Activated CD4-positive, alpha-beta T cell treated with anti-CD3 and anti-CD28 coated beads, Interleukin-2, amount 10 ng/mL, durations not matched to agents 7 days and 5 days (primary cell): ENCODE measurements at regions of chr6 and their contacts with region 1.

Region 1: DNA sequence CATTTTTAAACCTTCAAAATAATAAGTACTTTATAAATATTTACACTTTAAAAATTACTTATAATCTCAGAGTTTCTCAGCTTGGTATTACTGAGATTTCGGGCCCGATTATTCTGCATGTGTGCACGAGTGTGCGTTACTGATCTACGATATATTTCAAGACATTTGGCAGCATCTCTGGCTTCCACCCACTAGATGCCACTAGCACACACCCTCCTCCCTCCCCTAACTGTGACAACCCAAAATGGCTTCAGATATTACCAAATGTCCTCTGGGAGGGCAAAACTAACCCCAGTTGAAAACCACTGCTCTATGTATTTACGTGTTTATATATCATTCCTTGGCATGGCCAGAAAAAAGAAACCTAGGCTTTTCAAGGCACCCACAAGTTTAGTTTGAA is 95.9 kb downstream of the FYN start:
- DNase-seq: no peak
- H3K4me3 Mint-ChIP-seq: no peak overlapping the region
- H3K27ac Mint-ChIP-seq: peak overlapping the region; percentile 66
- H3K4me1 Mint-ChIP-seq: peaks cover 84% of the 10 kb centered on the region
- H3K27me3 Mint-ChIP-seq: no peaks in the 10 kb centered on the region

Region 2: GRCh38 chr6:111764238-111765175 is 12.8 kb before region 1 on chr6:
- CTCF ChIA-PET with region 1: interaction called, 12 read pairs
- POLR2A ChIA-PET with region 1: interaction called, 3 read pairs
- DNase-seq: peak; percentile 47
- H3K4me3 Mint-ChIP-seq: peak overlapping the region; percentile 17
- H3K27ac Mint-ChIP-seq: peak overlapping the region; percentile 91
- H3K4me1 Mint-ChIP-seq: peaks cover 100% of the 10 kb centered on the region
- H3K27me3 Mint-ChIP-seq: no peaks in the 10 kb centered on the region

Region 3: DNA sequence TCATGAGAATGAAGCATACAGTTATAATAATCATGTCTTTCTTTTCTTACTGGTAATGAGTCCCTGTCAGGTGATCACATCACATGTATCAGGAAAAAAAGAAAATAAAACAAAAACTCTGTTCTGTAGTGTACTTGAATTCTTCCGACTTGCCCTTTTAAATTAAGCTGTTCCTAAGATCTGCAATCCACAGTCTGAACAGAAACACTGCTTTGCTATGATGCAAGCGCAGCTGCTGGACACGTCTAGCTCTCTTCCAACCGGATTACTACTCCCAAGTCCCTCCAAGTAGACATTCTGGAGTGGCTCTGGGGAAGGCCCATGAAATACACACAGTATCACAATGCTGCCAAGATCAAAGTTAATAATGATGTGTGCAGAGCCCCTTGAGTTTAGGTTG is 12.2 kb after region 1 on chr6:
- CTCF ChIA-PET with region 1: interaction called, 17 read pairs
- POLR2A ChIA-PET with region 1: no interaction called
- DNase-seq: no peak
- H3K4me3 Mint-ChIP-seq: no peak overlapping the region
- H3K27ac Mint-ChIP-seq: no peak overlapping the region
- H3K4me1 Mint-ChIP-seq: peaks cover 48% of the 10 kb centered on the region
- H3K27me3 Mint-ChIP-seq: no peaks in the 10 kb centered on the region

Region 4: GRCh38 chr6:111804627-111805235 is 27.4 kb after region 1 on chr6:
- CTCF ChIA-PET with region 1: interaction called, 10 read pairs
- POLR2A ChIA-PET with region 1: no interaction called
- DNase-seq: peak; percentile 74
- H3K4me3 Mint-ChIP-seq: peak overlapping the region; percentile 66
- H3K27ac Mint-ChIP-seq: peak overlapping the region; percentile 82
- H3K4me1 Mint-ChIP-seq: peaks cover 86% of the 10 kb centered on the region
- H3K27me3 Mint-ChIP-seq: no peaks in the 10 kb centered on the region

Region 5: DNA sequence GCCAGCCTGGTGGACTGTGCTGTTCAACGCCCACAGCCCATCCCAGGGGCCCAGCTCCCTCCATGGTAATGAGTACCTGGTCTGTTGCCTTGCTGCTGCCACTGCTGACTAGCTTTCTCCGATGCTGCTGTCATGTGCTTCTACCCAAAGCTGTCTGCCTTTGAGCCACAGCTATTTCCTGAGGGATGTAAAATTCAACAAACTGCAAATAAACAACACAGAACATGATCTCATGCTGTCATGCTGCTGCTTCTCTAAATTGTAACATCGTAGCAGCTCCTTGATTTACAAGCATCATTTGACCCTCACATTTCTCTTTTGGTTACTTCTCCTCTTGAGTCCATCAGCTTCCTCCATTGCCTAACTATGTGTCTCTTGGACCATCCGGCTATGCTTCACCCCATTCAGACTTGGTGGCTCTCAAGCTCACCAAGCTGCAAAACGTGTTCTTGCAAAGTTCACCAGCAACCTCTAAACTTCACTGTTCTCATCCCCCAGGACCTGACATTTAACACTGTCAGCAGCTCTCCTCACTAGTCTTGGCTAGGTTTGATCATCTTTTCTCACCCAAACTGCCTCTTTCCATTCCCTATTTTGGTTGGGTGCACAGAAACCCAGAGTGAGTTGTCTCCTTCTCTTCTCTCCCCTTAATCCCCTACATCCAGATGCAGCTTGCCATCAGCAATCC is 41.3 kb after region 1 on chr6:
- CTCF ChIA-PET with region 1: no interaction called
- POLR2A ChIA-PET with region 1: no interaction called
- DNase-seq: peak; percentile 31
- H3K4me3 Mint-ChIP-seq: no peak overlapping the region
- H3K27ac Mint-ChIP-seq: peak overlapping the region; percentile 15
- H3K4me1 Mint-ChIP-seq: peaks cover 51% of the 10 kb centered on the region
- H3K27me3 Mint-ChIP-seq: no peaks in the 10 kb centered on the region

Region 6: GRCh38 chr6:111918825-111919224 is 141.5 kb after region 1 on chr6:
- CTCF ChIA-PET with region 1: no interaction called
- POLR2A ChIA-PET with region 1: no interaction called
- DNase-seq: no peak
- H3K4me3 Mint-ChIP-seq: no peak overlapping the region
- H3K27ac Mint-ChIP-seq: no peak overlapping the region
- H3K4me1 Mint-ChIP-seq: peaks cover 7% of the 10 kb centered on the region
- H3K27me3 Mint-ChIP-seq: no peaks in the 10 kb centered on the region